Mammary epithelial cell (primary cell): ENCODE measurements at regions of chr22 and their contacts with region 1.

Region 1: DNA sequence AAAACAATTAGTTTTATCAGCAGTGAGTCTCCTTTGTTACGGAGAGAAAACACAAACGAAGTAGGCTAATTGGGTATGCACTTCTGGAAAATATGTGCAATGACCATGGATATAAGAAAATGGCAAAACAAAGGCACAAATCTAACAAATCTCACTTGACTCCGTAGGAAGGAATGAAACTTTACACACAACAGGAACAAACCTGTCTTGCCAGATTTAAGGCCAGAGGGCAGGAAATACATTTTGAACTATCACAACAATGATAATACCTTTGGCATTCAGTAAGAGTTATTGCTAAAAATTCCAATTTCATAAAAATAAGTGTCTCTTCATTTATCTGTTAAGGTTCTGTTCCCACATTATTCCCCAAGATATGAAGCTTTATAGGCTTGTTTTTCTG is 36.6 kb downstream of the SLC25A17 start:
- DNase-seq: peak; percentile 60
- H3K4me3 ChIP-seq: peak overlapping the region in 2 of 3 experiments; percentile 10 to 23
- H3K27ac ChIP-seq: peak overlapping the region; percentile 72
- H3K4me1 ChIP-seq: peaks cover 12% of the 10 kb centered on the region
- H3K27me3 ChIP-seq: no peaks in the 10 kb centered on the region
- CTCF ChIP-seq: no peak

Region 2: GRCh38 chr22:40385036-40385782 is 397.3 kb before region 1 on chr22:
- CTCF ChIA-PET with region 1: no interaction called
- dilution Hi-C with region 1: loop called (anchors 10 kb)
- in situ Hi-C with region 1: no loop called
- intact Hi-C with region 1: no loop called
- DNase-seq: no peak
- H3K4me3 ChIP-seq: no peak overlapping the region
- H3K27ac ChIP-seq: no peak overlapping the region
- H3K4me1 ChIP-seq: no peaks in the 10 kb centered on the region
- H3K27me3 ChIP-seq: no peaks in the 10 kb centered on the region
- CTCF ChIP-seq: no peak

Region 3: DNA sequence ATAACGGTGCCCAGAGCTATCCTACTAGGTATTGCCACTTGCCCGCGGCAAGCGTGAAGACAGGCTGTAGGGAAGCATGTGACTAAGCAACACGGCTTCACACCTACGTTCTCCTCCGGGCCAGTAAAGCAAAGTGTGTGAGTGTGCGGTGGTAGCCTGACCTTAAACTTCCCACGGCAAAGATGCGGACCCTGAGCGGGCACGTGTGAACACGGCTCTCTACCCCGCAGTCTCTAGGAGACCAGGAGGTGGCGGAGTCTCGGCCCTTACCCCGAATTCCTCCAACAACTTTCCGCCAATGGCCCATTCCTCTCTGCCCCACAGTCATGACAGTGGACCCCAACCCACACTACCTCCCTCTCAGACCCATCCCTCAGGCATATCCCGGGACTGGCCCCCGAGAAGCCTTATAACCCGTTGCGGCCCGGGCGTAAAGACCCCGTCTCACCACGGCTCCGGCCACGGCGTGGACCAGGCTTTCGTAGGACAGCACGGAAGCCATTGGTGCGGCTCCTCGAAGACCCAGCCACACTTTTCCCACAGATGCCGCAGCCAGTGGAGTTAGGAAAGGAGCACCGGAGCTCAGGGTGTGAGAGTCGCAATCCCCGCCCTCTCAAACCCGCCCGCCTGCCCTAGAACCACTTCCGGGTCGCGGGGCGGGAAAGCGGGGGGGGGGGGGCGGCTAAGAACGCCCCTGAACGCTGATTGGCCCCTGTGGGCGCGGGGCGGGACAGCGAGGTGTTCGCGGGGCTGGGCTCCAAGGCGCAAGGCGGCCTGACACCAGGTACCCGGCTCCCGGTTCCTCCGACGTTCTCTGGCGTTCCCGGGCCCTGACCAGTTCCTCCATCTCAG is 36.5 kb after region 1 on chr22 and contains the start of gene SLC25A17:
- CTCF ChIA-PET with region 1: no interaction called
- dilution Hi-C with region 1: no loop called
- in situ Hi-C with region 1: no loop called
- intact Hi-C with region 1: loop called (anchors 2 kb)
- DNase-seq: peak; percentile 83
- H3K4me3 ChIP-seq: peak within 1 kb of the TSS; percentile 76 to 90 (median 84)
- H3K27ac ChIP-seq: peak within 1 kb of the TSS; percentile 56
- H3K4me1 ChIP-seq: peaks cover 17% of the 10 kb centered on the region
- H3K27me3 ChIP-seq: no peaks in the 10 kb centered on the region
- CTCF ChIP-seq: peak in 1 of 2 donors; percentile 47
- total RNA-seq, gene SLC25A17: 24.8 to 31.6 TPM

Region 4: GRCh38 chr22:41341990-41342389 is 559.5 kb after region 1 on chr22:
- CTCF ChIA-PET with region 1: no interaction called
- dilution Hi-C with region 1: no loop called
- in situ Hi-C with region 1: no loop called
- intact Hi-C with region 1: no loop called
- DNase-seq: no peak
- H3K4me3 ChIP-seq: no peak overlapping the region
- H3K27ac ChIP-seq: no peak overlapping the region
- H3K4me1 ChIP-seq: no peaks in the 10 kb centered on the region
- H3K27me3 ChIP-seq: no peaks in the 10 kb centered on the region
- CTCF ChIP-seq: no peak